ENCODE measurements at regions of chr6 and their contacts with region 1.

Region 1: GRCh38 chr6:20401205-20402091 is at the start of gene E2F3:
- DNase-seq: peak; percentile 97

Region 2: DNA sequence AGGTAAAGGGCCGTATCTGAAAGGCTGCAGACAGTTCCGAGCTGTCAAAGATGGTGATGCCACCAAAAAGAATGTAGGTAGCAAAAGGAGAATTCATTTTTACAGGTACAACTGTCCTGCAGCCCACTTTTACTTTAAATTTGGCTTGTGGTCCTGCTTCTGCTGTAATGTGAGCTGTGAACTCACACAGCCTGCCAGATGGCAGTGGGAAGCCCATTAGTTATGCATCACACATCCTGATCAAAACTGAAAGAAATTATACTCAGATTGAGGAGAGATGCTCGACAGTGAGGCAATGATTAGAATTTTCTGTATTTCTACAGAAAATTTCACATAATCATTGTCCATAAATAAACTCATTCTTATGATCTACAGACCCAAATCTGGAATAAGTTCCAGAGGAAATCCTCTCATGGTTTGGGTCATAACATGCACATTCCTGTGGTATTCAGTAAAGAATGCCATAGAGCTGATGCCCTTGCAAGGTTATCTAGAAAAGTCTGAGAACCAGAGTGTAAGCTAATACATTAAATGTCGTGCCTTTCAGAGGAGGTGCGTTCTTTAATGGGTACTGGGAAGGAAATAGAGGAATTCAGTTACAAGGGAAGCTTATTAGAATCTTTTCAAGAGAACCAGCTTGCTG is 23.7 kb before region 1 on chr6:
- CTCF ChIA-PET with region 1: interaction called, 6 read pairs
- POLR2A ChIA-PET with region 1: interaction called, 11 read pairs
- DNase-seq: no peak

Region 3: GRCh38 chr6:20411953-20412681 is 10.7 kb after region 1 on chr6:
- CTCF ChIA-PET with region 1: interaction called, 10 read pairs
- POLR2A ChIA-PET with region 1: interaction called, 5 read pairs
- DNase-seq: no peak

Region 4: GRCh38 chr6:20582586-20583446 is 181.4 kb after region 1 on chr6:
- CTCF ChIA-PET with region 1: no interaction called
- POLR2A ChIA-PET with region 1: no interaction called
- DNase-seq: no peak